ENCODE measurements at regions of chr2 and their contacts with region 1.

Region 1: DNA sequence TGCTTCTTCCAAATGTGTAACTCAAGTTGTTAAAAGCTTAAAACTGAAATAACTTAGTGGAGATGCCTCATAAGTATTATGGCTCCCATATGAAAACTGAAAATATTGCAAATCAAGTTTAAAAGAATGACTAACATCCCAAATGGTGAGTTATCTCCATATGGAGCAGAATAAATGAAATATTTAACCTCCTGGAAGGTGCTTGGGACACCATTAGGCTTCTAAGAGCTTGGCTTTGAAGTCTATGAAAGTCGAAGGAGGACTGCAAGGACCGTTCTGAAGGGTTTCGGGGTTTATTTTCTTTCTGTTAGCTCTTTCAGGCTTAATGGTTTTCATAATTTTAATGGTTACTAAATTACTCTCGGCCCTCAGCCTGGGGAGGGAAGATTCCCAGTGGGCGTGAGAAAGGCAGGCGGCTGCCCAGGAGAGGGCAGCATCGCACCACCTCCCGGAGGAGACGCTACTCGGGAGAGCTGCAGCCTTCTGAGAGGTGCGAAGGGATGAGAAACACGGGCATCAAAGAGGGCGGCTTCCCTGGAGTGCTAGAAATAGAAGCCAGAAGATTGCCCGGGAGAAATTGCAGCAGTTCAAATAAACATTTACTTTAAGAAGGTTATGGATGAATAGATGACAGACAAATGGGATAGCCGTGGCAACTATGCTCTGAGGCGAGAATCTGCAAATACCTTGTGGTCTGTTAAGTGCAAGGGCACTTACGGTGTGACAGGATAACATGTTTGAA is 43.1 kb downstream of the MAP3K19 start:
- DNase-seq: peak; percentile 76 to 88 (median 88)
- ATAC-seq: peak; percentile 97
- H3K4me3 ChIP-seq: no peak overlapping the region
- H3K27ac ChIP-seq: no peak overlapping the region
- H3K4me1 ChIP-seq: no peaks in the 10 kb centered on the region
- H3K27me3 ChIP-seq: no peaks in the 10 kb centered on the region

Region 2: GRCh38 chr2:135056790-135057189 is 52.6 kb after region 1 on chr2:
- intact Hi-C with region 1: no loop called
- DNase-seq: no peak
- ATAC-seq: no peak
- H3K4me3 ChIP-seq: no peak overlapping the region
- H3K27ac ChIP-seq: no peak overlapping the region
- H3K4me1 ChIP-seq: peaks cover 3% of the 10 kb centered on the region
- H3K27me3 ChIP-seq: no peaks in the 10 kb centered on the region

Region 3: GRCh38 chr2:135072125-135072997 is 68.2 kb after region 1 on chr2:
- intact Hi-C with region 1: no loop called
- DNase-seq: no peak
- ATAC-seq: no peak
- H3K4me3 ChIP-seq: no peak overlapping the region
- H3K27ac ChIP-seq: no peak overlapping the region
- H3K4me1 ChIP-seq: peaks cover 2% of the 10 kb centered on the region
- H3K27me3 ChIP-seq: no peaks in the 10 kb centered on the region

Region 4: DNA sequence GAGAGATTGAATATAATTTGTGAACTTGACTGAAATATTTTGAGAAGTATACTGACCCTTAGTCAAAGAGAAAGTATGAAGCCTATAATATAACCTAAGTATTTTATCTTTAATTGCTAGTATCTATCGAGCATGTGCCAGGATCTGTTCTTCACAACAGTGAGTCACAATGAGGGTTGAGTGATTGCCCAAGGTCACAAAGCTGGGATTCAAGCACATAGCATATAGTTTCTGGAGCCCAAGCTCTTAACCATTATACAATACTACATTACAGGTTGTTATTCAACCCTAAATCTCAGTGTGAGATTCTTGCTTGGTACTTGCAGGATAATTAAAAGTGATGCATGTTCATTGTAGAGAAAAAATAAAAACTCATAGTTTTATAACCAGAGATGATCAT is 145.1 kb after region 1 on chr2:
- intact Hi-C with region 1: loop called in 1 of 4 experiments (anchors 10 kb)
- DNase-seq: no peak
- ATAC-seq: peak in 1 of 2 donors; percentile 60
- H3K4me3 ChIP-seq: no peak overlapping the region
- H3K27ac ChIP-seq: no peak overlapping the region
- H3K4me1 ChIP-seq: peaks cover 5% of the 10 kb centered on the region
- H3K27me3 ChIP-seq: no peaks in the 10 kb centered on the region

Region 5: DNA sequence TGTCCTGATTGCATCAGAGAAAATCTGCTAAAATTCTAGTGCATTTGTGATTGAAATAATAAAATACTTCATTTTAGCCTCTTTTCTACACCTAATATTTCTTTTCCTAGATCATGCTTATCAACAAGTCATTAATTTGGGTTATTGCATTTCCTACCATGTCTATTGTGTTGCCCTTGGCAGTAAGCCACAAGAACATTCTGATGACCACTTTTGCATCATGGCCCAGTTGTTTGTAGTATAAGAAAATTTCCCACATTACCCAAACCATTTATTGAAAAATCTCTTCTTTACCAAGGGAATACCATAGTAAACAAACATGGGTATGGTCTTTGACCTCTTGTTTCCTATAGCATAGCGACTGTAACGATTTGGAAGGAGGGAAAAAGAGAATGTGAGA is 603.4 kb after region 1 on chr2:
- intact Hi-C with region 1: loop called in 1 of 4 experiments (anchors 5 kb)
- DNase-seq: no peak
- ATAC-seq: no peak
- H3K4me3 ChIP-seq: no peak overlapping the region
- H3K27ac ChIP-seq: no peak overlapping the region
- H3K4me1 ChIP-seq: no peaks in the 10 kb centered on the region
- H3K27me3 ChIP-seq: no peaks in the 10 kb centered on the region

Region 6: GRCh38 chr2:135709992-135710391 is 705.8 kb after region 1 on chr2:
- intact Hi-C with region 1: loop called in 3 of 4 experiments (anchors 5 to 10 kb)
- DNase-seq: peak; percentile 39 to 78 (median 70)
- ATAC-seq: peak; percentile 32 to 61
- H3K4me3 ChIP-seq: no peak overlapping the region
- H3K27ac ChIP-seq: no peak overlapping the region
- H3K4me1 ChIP-seq: no peaks in the 10 kb centered on the region
- H3K27me3 ChIP-seq: no peaks in the 10 kb centered on the region